Mammary epithelial cell (primary cell): ENCODE measurements at regions of chr1 and their contacts with region 1.

Region 1: GRCh38 chr1:93061895-93062792 is 16.9 kb upstream of the MTF2 start:
- DNase-seq: peak; percentile 39
- H3K4me3 ChIP-seq: no peak overlapping the region
- H3K27ac ChIP-seq: no peak overlapping the region
- H3K4me1 ChIP-seq: no peaks in the 10 kb centered on the region
- H3K27me3 ChIP-seq: peaks cover 2% of the 10 kb centered on the region
- CTCF ChIP-seq: peak; percentile 59 to 68

Region 2: DNA sequence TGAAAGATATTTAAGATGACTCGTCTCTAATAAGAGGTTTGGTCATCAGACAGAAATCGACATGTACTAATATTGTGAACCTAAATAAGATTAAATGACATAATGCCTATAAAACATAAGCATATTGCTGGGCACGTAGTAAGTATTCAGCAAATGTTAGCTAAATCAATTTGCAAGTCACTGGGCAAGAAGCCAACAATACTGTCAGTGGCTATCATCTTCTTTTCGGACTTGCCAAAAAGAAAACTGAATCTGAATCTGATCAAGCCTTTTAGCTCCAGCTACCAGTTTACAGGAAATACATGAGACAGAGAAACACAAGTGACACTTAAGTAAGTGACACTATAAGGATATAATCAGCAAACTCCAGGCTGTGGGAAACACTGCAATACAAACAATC is 184.4 kb before region 1 on chr1:
- CTCF ChIA-PET with region 1: interaction called, 11 read pairs
- dilution Hi-C with region 1: no loop called
- in situ Hi-C with region 1: no loop called
- intact Hi-C with region 1: no loop called
- DNase-seq: no peak
- H3K4me3 ChIP-seq: no peak overlapping the region
- H3K27ac ChIP-seq: no peak overlapping the region
- H3K4me1 ChIP-seq: peaks cover 2% of the 10 kb centered on the region
- H3K27me3 ChIP-seq: no peaks in the 10 kb centered on the region
- CTCF ChIP-seq: no peak

Region 3: GRCh38 chr1:92960395-92961130 is 101.6 kb before region 1 on chr1:
- CTCF ChIA-PET with region 1: no interaction called
- dilution Hi-C with region 1: no loop called
- in situ Hi-C with region 1: no loop called
- intact Hi-C with region 1: loop called (anchors 2 kb)
- DNase-seq: peak; percentile 81
- H3K4me3 ChIP-seq: peak overlapping the region; percentile 62 to 70 (median 67)
- H3K27ac ChIP-seq: peak overlapping the region; percentile 80
- H3K4me1 ChIP-seq: peaks cover 15% of the 10 kb centered on the region
- H3K27me3 ChIP-seq: no peaks in the 10 kb centered on the region
- CTCF ChIP-seq: peak; percentile 60 to 85

Region 4: DNA sequence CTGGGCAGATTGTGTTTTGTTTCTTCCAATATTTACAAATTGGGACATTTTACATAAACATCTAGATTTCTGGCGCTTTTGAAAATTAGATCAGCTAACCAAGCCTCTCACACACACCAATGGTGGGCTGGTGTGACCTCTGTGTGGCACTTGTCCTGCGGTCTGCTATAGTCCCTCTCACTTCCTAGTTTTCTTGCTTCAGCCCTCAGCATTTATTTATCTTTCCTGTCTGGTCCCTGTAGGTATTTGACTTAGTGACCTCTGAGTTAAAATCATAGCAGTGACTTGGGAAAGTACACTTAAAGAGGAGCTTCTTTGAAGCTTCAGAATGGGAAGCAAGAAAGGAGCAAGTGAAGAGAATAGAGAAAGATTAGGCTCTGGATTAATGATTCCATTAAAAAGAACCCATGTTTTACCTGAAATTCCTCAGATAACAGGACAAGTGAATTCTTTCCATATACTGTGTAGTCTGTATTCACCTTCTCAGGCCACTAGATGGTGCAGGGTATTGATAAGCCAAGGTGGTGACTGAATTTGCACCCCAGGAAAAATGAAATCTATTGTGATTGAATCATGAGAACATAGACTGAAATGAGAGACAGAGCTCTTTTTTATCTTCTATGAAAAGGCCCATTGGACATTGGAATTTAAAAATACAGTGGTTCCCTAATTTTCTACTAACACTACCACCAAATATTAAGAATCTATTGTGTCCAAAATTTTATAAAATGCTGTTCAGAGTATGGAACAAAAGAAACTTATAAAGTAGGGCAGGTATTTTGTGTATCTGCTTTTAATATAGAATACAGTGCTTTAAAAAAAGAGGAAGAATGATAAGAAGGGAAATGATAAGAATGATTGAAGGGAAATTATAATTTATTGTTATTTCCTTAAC is 93.8 kb before region 1 on chr1:
- CTCF ChIA-PET with region 1: no interaction called
- dilution Hi-C with region 1: no loop called
- in situ Hi-C with region 1: no loop called
- intact Hi-C with region 1: loop called (anchors 1 kb)
- DNase-seq: peak; percentile 27
- H3K4me3 ChIP-seq: no peak overlapping the region
- H3K27ac ChIP-seq: no peak overlapping the region
- H3K4me1 ChIP-seq: peaks cover 10% of the 10 kb centered on the region
- H3K27me3 ChIP-seq: no peaks in the 10 kb centered on the region
- CTCF ChIP-seq: peak; percentile 76 to 80

Region 5: GRCh38 chr1:92990828-92991227 is 71.3 kb before region 1 on chr1:
- CTCF ChIA-PET with region 1: no interaction called
- dilution Hi-C with region 1: no loop called
- in situ Hi-C with region 1: no loop called
- intact Hi-C with region 1: no loop called
- DNase-seq: no peak
- H3K4me3 ChIP-seq: no peak overlapping the region
- H3K27ac ChIP-seq: no peak overlapping the region
- H3K4me1 ChIP-seq: no peaks in the 10 kb centered on the region
- H3K27me3 ChIP-seq: no peaks in the 10 kb centered on the region
- CTCF ChIP-seq: no peak

Region 6: GRCh38 chr1:93021539-93022134 is 40.5 kb before region 1 on chr1:
- CTCF ChIA-PET with region 1: no interaction called
- dilution Hi-C with region 1: no loop called
- in situ Hi-C with region 1: no loop called
- intact Hi-C with region 1: loop called (anchors 1 kb)
- DNase-seq: no peak
- H3K4me3 ChIP-seq: no peak overlapping the region
- H3K27ac ChIP-seq: no peak overlapping the region
- H3K4me1 ChIP-seq: no peaks in the 10 kb centered on the region
- H3K27me3 ChIP-seq: peaks cover 2% of the 10 kb centered on the region
- CTCF ChIP-seq: peak; percentile 70 to 88